Gastrocnemius medialis (tissue), 4 donors: ENCODE measurements at regions of chr1 and their contacts with region 1.

Region 1: GRCh38 chr1:227728059-227728891 is 6.8 kb downstream of the JMJD4 start:
- DNase-seq: peak; percentile 59 to 80
- ATAC-seq: peak; percentile 71 to 72
- H3K4me3 ChIP-seq: peak overlapping the region; percentile 59 to 79 (median 62)
- H3K27ac ChIP-seq: peak overlapping the region; percentile 79 to 86 (median 83)
- H3K4me1 ChIP-seq: peaks cover 15 to 21% of the 10 kb centered on the region in 2 donors
- H3K27me3 ChIP-seq: no peaks in the 10 kb centered on the region
- CTCF ChIP-seq: peak in 1 of 5 experiments; percentile 13
- POLR2A ChIP-seq: no peak

Region 2: DNA sequence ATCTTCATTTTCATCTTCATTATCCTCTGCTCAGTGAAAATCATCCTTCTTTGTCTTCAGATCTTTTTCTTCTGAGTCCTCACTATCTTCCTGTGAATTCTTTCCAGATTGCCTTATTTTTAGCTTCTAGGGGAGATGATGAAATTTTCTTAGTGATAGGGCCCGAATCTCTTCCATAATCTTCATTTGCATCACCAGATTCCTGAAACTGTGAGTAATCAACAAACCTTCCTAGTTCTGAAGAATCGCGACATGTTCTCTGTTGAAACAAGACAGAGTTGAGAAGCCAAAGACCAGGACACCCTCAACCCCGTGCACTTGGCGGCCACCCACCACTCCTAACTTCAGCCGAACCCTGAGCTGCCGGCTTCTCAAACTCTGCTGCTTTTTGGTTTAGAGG is 317.2 kb before region 1 on chr1:
- in situ Hi-C with region 1: no loop called
- intact Hi-C with region 1: no loop called
- DNase-seq: no peak
- ATAC-seq: no peak
- H3K4me3 ChIP-seq: no peak overlapping the region
- H3K27ac ChIP-seq: no peak overlapping the region
- H3K4me1 ChIP-seq: no peaks in the 10 kb centered on the region
- H3K27me3 ChIP-seq: no peaks in the 10 kb centered on the region
- CTCF ChIP-seq: no peak
- POLR2A ChIP-seq: no peak

Region 3: GRCh38 chr1:227542143-227543120 is 185.8 kb before region 1 on chr1:
- in situ Hi-C with region 1: no loop called
- intact Hi-C with region 1: loop called (anchors 5 kb)
- DNase-seq: peak; percentile 68 to 84
- ATAC-seq: peak; percentile 92 to 93
- H3K4me3 ChIP-seq: peak overlapping the region; percentile 75 to 91 (median 88)
- H3K27ac ChIP-seq: peak overlapping the region; percentile 82 to 94 (median 88)
- H3K4me1 ChIP-seq: peaks cover 5 to 14% of the 10 kb centered on the region in 2 donors
- H3K27me3 ChIP-seq: no peaks in the 10 kb centered on the region
- CTCF ChIP-seq: peak; percentile 90 to 99 (median 97)
- POLR2A ChIP-seq: peak in 1 of 2 donors; percentile 46

Region 4: GRCh38 chr1:227753999-227754711 is 25.9 kb after region 1 on chr1:
- in situ Hi-C with region 1: no loop called
- intact Hi-C with region 1: loop called (anchors 1 kb)
- DNase-seq: peak; percentile 69 to 90
- ATAC-seq: peak; percentile 82 to 85
- H3K4me3 ChIP-seq: no peak overlapping the region
- H3K27ac ChIP-seq: peak overlapping the region; percentile 45 to 90 (median 84)
- H3K4me1 ChIP-seq: peaks cover 68 to 75% of the 10 kb centered on the region in 2 donors
- H3K27me3 ChIP-seq: no peaks in the 10 kb centered on the region
- CTCF ChIP-seq: no peak
- POLR2A ChIP-seq: no peak

Region 5: DNA sequence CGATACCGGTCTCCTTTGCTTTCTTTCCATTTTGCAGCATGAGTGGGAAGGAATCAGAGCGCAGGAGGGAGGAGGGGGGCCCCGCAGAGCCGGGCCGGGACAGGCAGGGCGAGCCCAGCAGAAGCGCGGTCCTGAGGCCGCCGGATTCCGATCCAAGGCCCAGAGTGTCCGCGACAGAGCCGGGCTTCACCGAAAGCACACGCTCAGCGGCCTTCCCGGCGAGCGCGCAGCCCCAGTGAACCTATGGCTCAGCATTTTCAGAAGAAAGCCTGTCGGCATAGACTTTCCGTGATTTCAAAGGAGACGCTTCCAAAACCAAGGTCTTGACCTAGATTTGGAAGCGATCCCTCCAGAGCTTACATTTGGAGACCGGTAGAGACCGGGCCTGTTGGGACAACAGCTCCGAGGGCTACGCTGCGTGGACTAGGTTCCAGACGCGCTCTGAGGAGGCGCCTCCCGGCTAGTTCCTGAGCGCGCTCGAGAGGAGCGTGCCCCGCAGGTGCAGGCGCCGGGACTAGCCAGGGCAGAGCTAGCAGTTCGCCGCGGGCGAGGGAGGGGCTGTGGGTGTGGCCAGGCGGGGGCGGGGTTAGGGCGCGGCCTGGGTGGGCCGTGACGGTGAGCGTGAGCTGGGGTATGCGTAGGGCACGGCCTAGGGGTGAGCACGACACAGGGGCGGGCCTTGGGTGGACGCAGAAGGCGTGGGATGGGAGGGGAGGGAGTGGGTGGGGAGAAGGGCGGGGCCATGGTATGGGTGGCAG is 59.4 kb after region 1 on chr1:
- in situ Hi-C with region 1: no loop called
- intact Hi-C with region 1: loop called (anchors 2 kb)
- DNase-seq: peak; percentile 87 to 91
- ATAC-seq: peak; percentile 76 to 79
- H3K4me3 ChIP-seq: peak overlapping the region; percentile 68 to 97 (median 70)
- H3K27ac ChIP-seq: peak overlapping the region; percentile 77 to 87 (median 82)
- H3K4me1 ChIP-seq: peaks cover 13 to 20% of the 10 kb centered on the region in 2 donors
- H3K27me3 ChIP-seq: no peaks in the 10 kb centered on the region
- CTCF ChIP-seq: no peak
- POLR2A ChIP-seq: peak; percentile 77 to 88